Colonic mucosa (tissue), 4 donors: ENCODE measurements at regions of chr4 and their contacts with region 1.

Region 1: GRCh38 chr4:145234091-145234706 is 53.8 kb upstream of the OTUD4 start:
- DNase-seq: peak; percentile 65
- H3K4me3 ChIP-seq: no peak overlapping the region
- H3K27ac ChIP-seq: no peak overlapping the region
- H3K4me1 ChIP-seq: no peaks in the 10 kb centered on the region
- H3K27me3 ChIP-seq: no peaks in the 10 kb centered on the region
- CTCF ChIP-seq: peak; percentile 64

Region 2: DNA sequence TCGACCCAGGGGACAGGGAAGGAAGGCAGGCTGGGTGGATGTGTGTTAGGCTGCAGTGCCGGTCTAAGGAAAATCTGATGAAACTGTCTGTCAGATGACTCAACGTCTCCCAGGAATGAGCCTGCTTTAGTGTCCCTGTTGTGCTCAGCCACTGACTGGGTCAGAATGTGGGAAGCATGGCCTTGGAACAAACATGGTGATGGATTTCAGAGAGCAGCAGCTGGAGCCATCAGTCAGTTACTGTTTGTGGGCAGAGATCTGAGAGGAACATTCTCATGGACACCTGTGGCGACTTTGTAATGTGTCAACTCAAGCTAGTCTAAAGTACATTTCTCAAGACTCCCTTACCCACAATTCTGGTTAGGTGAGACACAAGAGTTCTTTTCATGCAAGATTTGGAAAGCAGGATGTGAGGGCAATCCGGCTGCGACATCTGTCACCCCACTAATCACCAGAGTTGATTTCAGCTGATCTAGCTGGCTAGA is 199.4 kb before region 1 on chr4:
- intact Hi-C with region 1: no loop called
- DNase-seq: no peak
- H3K4me3 ChIP-seq: no peak overlapping the region
- H3K27ac ChIP-seq: no peak overlapping the region
- H3K4me1 ChIP-seq: no peaks in the 10 kb centered on the region
- H3K27me3 ChIP-seq: no peaks in the 10 kb centered on the region
- CTCF ChIP-seq: no peak

Region 3: DNA sequence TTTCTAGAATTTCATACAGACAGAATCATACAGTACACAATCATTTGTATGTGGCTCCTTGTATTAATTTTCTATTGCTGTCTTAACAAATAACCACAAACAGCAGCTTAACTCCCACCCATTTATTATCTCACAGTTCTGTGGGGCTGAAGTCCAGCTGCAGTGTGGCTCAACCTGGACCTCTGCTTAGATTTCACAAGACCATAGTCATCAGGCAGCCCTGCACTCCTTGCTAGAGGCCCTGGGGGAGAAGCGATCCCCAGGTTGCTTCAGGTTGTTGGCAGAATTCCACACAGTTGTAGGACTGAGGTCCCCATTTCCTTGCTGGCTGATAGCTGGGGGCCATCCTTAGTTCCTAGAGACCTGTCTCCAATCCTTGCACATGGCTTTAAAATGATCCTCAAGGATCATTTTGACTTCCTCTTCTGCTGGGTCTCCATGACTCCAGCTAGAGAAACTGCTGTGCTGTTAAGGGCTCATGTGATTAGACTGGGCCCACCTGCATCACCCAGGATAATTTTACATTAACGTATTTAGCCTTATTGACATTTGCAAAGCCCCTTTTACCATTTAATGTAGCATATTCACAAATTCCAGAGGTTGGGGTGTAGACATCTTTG is 186.5 kb after region 1 on chr4:
- intact Hi-C with region 1: no loop called
- DNase-seq: no peak
- H3K4me3 ChIP-seq: no peak overlapping the region
- H3K27ac ChIP-seq: no peak overlapping the region
- H3K4me1 ChIP-seq: no peaks in the 10 kb centered on the region
- H3K27me3 ChIP-seq: no peaks in the 10 kb centered on the region
- CTCF ChIP-seq: no peak

Region 4: DNA sequence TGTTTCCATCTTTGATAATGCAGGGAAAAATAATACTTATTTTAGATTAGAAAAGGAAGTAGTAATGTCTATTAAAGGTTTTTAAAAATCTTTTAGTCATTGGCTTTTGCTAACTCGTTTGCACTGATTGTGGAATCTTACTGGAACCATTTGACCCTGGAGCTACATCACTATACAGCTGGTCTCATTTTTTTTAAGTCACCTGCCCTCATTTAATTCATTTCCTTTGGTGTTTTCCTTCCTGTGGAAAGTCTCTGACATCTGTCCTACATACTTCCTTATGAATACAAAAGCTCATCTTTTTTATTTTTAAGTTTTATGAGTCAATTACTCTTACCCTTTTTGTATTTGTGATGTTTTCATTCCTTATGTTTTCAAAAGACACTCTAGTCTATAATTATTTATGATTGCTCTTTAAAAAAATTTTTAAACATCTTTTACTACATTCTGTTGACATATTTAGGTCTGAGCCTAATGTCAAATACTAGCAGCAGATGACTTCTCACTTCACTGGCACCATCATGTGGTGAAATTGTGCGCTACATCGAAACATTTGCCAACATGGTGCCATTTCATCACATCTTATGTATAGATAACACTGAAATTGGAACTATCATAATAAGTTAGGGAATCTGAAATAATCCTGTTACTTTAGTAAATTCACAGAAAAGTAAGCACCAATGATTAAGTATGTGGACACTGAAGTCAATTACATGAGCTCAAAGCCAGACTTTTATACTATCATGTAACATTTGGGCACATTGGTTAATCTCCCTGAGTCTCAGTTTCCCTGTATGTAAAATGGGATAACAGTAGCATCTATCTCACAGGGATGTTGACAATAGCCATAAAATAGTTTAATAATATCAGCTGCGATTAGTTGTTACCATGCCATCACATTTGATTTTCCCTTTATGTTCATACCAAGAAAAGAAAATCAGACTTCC is 375.6 kb after region 1 on chr4:
- intact Hi-C with region 1: loop called (anchors 2 kb)
- DNase-seq: peak; percentile 75
- H3K4me3 ChIP-seq: no peak overlapping the region
- H3K27ac ChIP-seq: no peak overlapping the region
- H3K4me1 ChIP-seq: no peaks in the 10 kb centered on the region
- H3K27me3 ChIP-seq: no peaks in the 10 kb centered on the region
- CTCF ChIP-seq: peak; percentile 63

Region 5: GRCh38 chr4:145808021-145808650 is 573.9 kb after region 1 on chr4:
- intact Hi-C with region 1: no loop called
- DNase-seq: no peak
- H3K4me3 ChIP-seq: no peak overlapping the region
- H3K27ac ChIP-seq: no peak overlapping the region
- H3K4me1 ChIP-seq: no peaks in the 10 kb centered on the region
- H3K27me3 ChIP-seq: no peaks in the 10 kb centered on the region
- CTCF ChIP-seq: no peak